ENCODE measurements at regions of chr17 and their contacts with region 1.

Region 1: DNA sequence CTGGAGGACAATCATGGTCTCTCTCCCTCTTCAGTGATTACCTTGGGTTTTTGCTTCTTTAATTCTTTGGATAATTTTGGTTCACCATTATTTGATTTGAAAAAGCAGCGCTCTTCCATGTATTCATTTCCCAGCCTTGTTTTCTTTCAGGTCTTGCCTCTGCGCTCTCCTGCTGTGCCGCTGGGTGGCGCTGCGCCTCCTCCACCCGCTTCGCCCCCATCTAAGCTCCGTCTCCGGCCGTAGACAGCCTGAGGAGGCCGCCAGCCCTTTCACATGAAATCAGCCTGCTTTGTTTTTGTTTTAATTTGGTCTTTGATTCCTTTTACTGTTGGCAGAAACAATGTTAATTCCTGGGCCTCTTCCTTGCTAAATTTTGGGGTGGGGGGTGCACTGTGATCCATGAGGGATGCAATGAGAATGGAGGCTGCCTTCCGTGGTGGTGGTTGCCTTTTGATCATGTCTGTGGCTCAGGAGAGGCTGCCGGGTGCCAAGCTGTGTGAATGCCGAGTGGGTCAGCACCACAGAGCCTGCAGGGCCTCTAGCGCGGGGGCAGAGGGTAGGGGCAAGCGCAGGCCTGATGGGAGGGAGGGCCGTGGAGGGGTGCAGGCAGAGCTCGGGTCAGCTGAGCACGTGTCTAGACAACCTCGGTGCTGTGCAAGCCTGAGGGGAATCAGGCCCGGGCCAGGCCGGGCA is 64.1 kb downstream of the PLD6 start:
- DNase-seq: peak; percentile 19 to 64 (median 55)
- ATAC-seq: peak; percentile 80
- H3K4me3 ChIP-seq: no peak overlapping the region
- H3K4me3 Mint-ChIP-seq: no peak overlapping the region
- H3K27ac ChIP-seq: no peak overlapping the region
- H3K27ac Mint-ChIP-seq: peak overlapping the region; percentile 77
- H3K4me1 ChIP-seq: no peaks in the 10 kb centered on the region
- H3K4me1 Mint-ChIP-seq: peaks cover 8% of the 10 kb centered on the region
- H3K27me3 ChIP-seq: no peaks in the 10 kb centered on the region
- H3K27me3 Mint-ChIP-seq: no peaks in the 10 kb centered on the region
- CTCF ChIP-seq: peak; percentile 58

Region 2: GRCh38 chr17:17001874-17002520 is 140.0 kb before region 1 on chr17:
- CTCF ChIA-PET with region 1: interaction called, 4 read pairs
- POLR2A ChIA-PET with region 1: no interaction called
- intact Hi-C with region 1: loop called (anchors 1 kb)
- DNase-seq: peak; percentile 58 to 86 (median 77)
- ATAC-seq: peak; percentile 98
- H3K4me3 ChIP-seq: no peak overlapping the region
- H3K4me3 Mint-ChIP-seq: no peak overlapping the region
- H3K27ac ChIP-seq: no peak overlapping the region
- H3K27ac Mint-ChIP-seq: no peak overlapping the region
- H3K4me1 ChIP-seq: no peaks in the 10 kb centered on the region
- H3K4me1 Mint-ChIP-seq: peaks cover 1% of the 10 kb centered on the region
- H3K27me3 ChIP-seq: no peaks in the 10 kb centered on the region
- H3K27me3 Mint-ChIP-seq: no peaks in the 10 kb centered on the region
- CTCF ChIP-seq: peak; percentile 89

Region 3: GRCh38 chr17:17125136-17126084 is 16.6 kb before region 1 on chr17:
- CTCF ChIA-PET with region 1: interaction called, 13 read pairs
- POLR2A ChIA-PET with region 1: interaction called, 4 read pairs
- intact Hi-C with region 1: no loop called
- DNase-seq: peak in 6 of 9 experiments; percentile 18 to 75 (median 56)
- ATAC-seq: peak; percentile 73
- H3K4me3 ChIP-seq: peak overlapping the region; percentile 25 to 38
- H3K4me3 Mint-ChIP-seq: peak overlapping the region; percentile 80
- H3K27ac ChIP-seq: peak overlapping the region; percentile 14 to 84
- H3K27ac Mint-ChIP-seq: peak overlapping the region; percentile 87
- H3K4me1 ChIP-seq: peaks cover 56% of the 10 kb centered on the region
- H3K4me1 Mint-ChIP-seq: peaks cover 74% of the 10 kb centered on the region
- H3K27me3 ChIP-seq: no peaks in the 10 kb centered on the region
- H3K27me3 Mint-ChIP-seq: no peaks in the 10 kb centered on the region
- CTCF ChIP-seq: no peak

Region 4: DNA sequence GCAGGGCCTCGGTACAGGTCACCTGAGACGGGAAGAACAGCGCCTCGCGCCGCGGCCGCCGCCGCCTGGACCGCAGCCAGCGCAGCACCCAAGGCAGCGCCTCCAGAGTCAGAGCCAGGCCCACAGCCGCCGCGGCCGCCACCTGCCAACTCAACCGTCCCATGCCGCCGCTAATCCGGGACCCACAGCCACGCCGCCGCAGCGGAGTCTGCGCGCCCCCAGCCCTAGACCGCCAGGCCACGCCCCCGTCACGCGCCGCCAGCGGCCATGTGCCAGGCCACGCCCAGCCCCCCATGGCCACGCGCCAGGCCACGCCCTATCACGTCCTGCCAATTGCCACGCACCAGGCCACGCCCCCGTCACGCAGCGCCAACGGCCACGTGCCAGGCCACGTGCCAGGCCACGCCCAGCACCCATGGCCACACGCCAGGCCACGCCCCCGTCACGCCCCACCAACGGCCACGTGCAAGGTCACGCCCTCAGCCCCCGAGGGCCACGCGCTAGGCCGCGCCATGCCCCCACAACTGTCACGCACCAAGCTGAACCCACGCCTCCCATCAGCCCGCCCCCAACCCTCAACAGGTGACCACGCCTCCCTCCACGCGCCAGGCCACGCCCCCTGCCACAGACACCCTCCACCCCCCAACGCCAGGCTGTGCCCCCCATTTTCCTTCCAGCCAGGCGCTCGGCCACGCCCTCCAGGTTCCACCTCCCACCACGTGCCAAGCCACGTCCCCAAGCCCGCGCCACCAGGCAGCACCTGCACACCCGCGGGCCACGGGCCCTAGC is 64.3 kb after region 1 on chr17 and contains the start of gene PLD6:
- CTCF ChIA-PET with region 1: interaction called, 4 read pairs
- POLR2A ChIA-PET with region 1: interaction called, 3 read pairs
- intact Hi-C with region 1: loop called in 1 of 2 experiments (anchors 5 kb)
- DNase-seq: peak; percentile 72 to 96 (median 94)
- ATAC-seq: peak; percentile 79
- H3K4me3 ChIP-seq: peak within 1 kb of the TSS; percentile 48 to 75
- H3K4me3 Mint-ChIP-seq: peak within 1 kb of the TSS; percentile 86
- H3K27ac ChIP-seq: peak within 1 kb of the TSS; percentile 41 to 59
- H3K27ac Mint-ChIP-seq: peak within 1 kb of the TSS; percentile 92
- H3K4me1 ChIP-seq: peaks cover 21% of the 10 kb centered on the region
- H3K4me1 Mint-ChIP-seq: peaks cover 29% of the 10 kb centered on the region
- H3K27me3 ChIP-seq: no peaks in the 10 kb centered on the region
- H3K27me3 Mint-ChIP-seq: no peaks in the 10 kb centered on the region
- CTCF ChIP-seq: no peak
- total RNA-seq, gene PLD6: 3.2 to 3.3 TPM

Region 5: DNA sequence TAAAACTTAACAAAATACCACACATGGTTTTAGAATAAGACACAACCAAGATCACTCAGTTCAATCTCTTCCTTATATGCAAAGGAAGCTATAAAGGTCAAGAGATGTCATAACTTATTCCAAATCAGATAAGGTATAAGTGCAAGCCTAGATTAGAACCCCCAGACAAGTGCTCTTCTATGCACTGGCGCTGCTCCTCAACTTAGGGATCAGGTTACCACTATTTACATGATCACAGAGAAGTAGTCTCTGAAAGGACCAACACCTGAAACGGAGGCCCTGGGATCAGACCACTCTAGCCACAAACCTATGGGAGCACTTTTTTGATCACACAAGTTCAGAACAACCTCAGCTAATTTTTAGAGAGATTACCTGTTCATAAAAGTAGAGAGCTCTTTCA is 122.4 kb after region 1 on chr17:
- CTCF ChIA-PET with region 1: no interaction called
- POLR2A ChIA-PET with region 1: no interaction called
- intact Hi-C with region 1: no loop called
- DNase-seq: no peak
- ATAC-seq: no peak
- H3K4me3 ChIP-seq: no peak overlapping the region
- H3K4me3 Mint-ChIP-seq: no peak overlapping the region
- H3K27ac ChIP-seq: no peak overlapping the region
- H3K27ac Mint-ChIP-seq: no peak overlapping the region
- H3K4me1 ChIP-seq: no peaks in the 10 kb centered on the region
- H3K4me1 Mint-ChIP-seq: no peaks in the 10 kb centered on the region
- H3K27me3 ChIP-seq: no peaks in the 10 kb centered on the region
- H3K27me3 Mint-ChIP-seq: no peaks in the 10 kb centered on the region
- CTCF ChIP-seq: no peak

Region 6: GRCh38 chr17:17313350-17313991 is 171.5 kb after region 1 on chr17:
- CTCF ChIA-PET with region 1: interaction called, 7 read pairs
- POLR2A ChIA-PET with region 1: no interaction called
- intact Hi-C with region 1: loop called (anchors 1 to 2 kb)
- DNase-seq: peak; percentile 45 to 85 (median 75)
- ATAC-seq: peak; percentile 100
- H3K4me3 ChIP-seq: no peak overlapping the region
- H3K4me3 Mint-ChIP-seq: no peak overlapping the region
- H3K27ac ChIP-seq: no peak overlapping the region
- H3K27ac Mint-ChIP-seq: no peak overlapping the region
- H3K4me1 ChIP-seq: peaks cover 4% of the 10 kb centered on the region
- H3K4me1 Mint-ChIP-seq: peaks cover 5% of the 10 kb centered on the region
- H3K27me3 ChIP-seq: no peaks in the 10 kb centered on the region
- H3K27me3 Mint-ChIP-seq: no peaks in the 10 kb centered on the region
- CTCF ChIP-seq: peak; percentile 81

Region 7: DNA sequence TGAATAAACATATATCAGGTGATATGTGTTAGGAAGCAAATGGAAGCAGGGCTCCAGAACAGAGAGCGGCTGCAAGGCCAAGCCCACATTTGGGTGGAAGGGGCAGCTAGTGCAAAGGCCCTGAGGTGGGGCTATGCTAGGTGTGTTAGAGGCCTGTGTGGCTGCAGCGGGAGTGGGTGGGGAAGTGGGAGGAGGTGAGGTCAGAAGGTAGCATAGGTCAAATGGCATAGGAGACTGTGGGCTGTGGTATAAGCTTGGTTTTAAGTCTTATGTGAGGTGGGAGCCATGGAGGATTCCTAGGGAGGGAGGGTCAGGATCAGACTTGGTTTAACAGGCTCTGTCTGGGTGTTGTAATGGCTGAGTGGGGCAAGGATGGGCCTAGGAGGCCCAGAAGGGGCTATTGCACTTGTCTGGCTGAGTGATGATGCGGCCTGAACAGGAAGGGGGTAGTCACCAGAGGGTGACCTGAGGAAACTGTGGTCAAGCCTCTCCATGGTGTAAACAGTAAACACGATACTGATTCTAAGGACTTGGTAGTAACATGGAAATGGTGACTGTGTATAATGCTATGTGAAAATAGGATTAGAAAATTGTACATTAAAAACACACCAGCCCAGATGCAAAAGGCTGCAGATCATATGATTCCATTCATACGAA is 570.4 kb after region 1 on chr17:
- CTCF ChIA-PET with region 1: no interaction called
- POLR2A ChIA-PET with region 1: no interaction called
- intact Hi-C with region 1: no loop called
- DNase-seq: peak in 1 of 9 experiments; percentile 29
- ATAC-seq: peak; percentile 34
- H3K4me3 ChIP-seq: no peak overlapping the region
- H3K4me3 Mint-ChIP-seq: no peak overlapping the region
- H3K27ac ChIP-seq: no peak overlapping the region
- H3K27ac Mint-ChIP-seq: no peak overlapping the region
- H3K4me1 ChIP-seq: peaks cover 15% of the 10 kb centered on the region
- H3K4me1 Mint-ChIP-seq: peaks cover 33% of the 10 kb centered on the region
- H3K27me3 ChIP-seq: no peaks in the 10 kb centered on the region
- H3K27me3 Mint-ChIP-seq: no peaks in the 10 kb centered on the region
- CTCF ChIP-seq: no peak

Measured in CD8-positive, alpha-beta T cell (primary cell).